ENCODE measurements at regions of chr1 and their contacts with region 1.

Region 1: DNA sequence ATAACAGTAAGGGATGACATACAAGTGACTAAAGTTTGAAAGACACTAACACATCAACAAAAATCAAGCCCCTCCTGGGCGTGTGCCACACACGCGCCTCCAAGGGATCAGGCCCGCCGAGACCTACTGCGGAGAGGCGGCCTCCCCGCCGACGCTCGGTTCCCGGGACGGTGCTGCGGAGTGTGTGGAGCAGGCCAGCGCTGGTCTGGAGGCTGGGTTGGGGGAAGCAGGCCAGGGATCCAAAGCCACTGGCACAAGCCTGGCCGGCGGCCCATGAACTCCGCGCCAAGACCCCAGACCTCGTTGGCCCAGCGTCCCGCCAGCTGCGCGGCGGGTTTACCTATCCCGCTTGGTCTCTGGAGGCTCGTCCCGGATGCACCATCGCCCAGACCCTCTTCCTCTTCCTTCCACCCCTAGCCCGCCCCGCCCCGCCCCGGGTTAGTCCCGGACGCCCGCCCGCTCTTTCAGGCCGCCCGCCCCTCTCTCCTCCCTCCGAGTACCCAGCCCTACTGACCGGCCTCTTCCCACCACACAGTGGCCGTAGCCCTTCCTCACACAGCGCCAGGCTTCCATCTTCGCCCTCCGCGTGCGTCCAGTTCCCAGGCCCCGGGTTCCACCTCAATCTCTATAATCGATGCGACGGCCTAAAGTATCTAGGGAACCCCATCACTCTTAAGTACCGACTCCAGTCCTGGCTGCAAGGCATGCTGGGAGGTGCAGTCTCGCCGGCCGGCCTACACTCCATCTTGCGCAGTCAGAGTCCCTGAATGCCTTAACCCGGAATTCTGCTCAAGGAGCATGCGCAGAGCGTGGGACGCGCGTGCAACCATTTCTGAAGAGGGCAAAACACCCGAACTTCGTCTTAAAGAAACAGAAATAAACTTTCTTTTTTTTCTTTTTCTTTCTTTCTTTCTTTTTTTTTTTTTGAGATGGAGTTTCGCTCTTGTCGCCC is at the start of gene ANGEL2:
- DNase-seq: peak; percentile 95 to 98 (median 97)
- ATAC-seq: peak; percentile 98 to 99 (median 98)
- H3K4me3 ChIP-seq: peak within 1 kb of the TSS; percentile 67 to 97 (median 85)
- H3K27ac ChIP-seq: peak within 1 kb of the TSS; percentile 66 to 98 (median 94)
- H3K4me1 ChIP-seq: peaks cover 3 to 31% (median 11%) of the 10 kb centered on the region in 12 donors
- H3K27me3 ChIP-seq: no peaks in the 10 kb centered on the region
- CTCF ChIP-seq: no peak
- POLR2A ChIP-seq: peak in 1 of 2 donors; percentile 51
- total RNA-seq, gene ANGEL2: 10.8 to 26.6 (median 15.4) TPM

Region 2: GRCh38 chr1:212916481-212917133 is 98.8 kb before region 1 on chr1:
- intact Hi-C with region 1: no loop called
- DNase-seq: peak; percentile 37 to 72 (median 54)
- ATAC-seq: peak; percentile 47 to 85 (median 76)
- H3K4me3 ChIP-seq: peak overlapping the region in 8 of 12 donors; percentile 5 to 39 (median 33)
- H3K27ac ChIP-seq: no peak overlapping the region
- H3K4me1 ChIP-seq: peaks cover 0 to 14% (median 0%) of the 10 kb centered on the region in 12 donors
- H3K27me3 ChIP-seq: peaks cover 0 to 9% (median 0%) of the 10 kb centered on the region in 9 donors
- CTCF ChIP-seq: no peak
- POLR2A ChIP-seq: no peak

Region 3: DNA sequence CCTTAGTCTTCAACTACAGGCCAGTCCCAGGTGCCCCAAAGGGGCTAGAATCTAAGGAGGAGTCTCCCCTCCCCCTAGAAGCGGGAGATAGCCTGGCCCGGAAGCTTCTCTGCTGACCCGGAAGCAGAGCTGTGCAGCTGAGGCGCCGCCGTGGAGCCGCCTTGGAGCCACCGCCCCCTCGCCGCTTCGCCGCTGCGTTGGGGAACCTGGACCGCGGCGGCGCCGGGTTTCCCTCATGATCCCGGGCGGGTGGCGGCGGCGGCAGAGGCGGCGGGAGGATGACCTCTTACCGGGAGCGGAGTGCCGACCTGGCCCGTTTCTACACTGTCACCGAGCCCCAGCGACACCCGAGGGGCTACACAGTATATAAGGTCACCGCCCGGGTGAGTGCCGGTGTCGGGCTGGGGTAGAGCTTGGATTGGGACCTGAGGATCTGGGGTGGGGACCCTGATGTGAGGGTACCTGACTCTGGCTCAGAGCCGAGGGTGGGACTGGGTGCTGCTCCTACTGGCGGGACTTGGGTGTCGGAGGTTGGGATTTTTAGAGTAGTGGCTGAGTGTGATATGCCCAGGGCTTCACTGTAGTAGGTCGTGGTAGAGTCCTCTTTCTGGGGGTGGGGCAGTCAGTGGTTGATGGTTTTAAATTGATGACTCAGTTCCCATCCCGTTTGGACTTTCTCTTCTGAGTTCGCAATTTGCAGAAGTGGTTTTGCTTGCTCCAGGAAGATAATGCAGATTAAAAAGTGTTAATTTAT is 35.9 kb after region 1 on chr1 and contains the start of gene RPS6KC1:
- intact Hi-C with region 1: loop called in 2 of 10 experiments (anchors 2 to 5 kb)
- DNase-seq: peak; percentile 85 to 93 (median 89)
- ATAC-seq: peak; percentile 95 to 100 (median 99)
- H3K4me3 ChIP-seq: peak within 1 kb of the TSS; percentile 74 to 98 (median 90)
- H3K27ac ChIP-seq: peak within 1 kb of the TSS in 11 of 12 donors; percentile 59 to 91 (median 78)
- H3K4me1 ChIP-seq: peaks cover 0 to 23% (median 12%) of the 10 kb centered on the region in 12 donors
- H3K27me3 ChIP-seq: peaks cover 0 to 28% (median 3%) of the 10 kb centered on the region in 9 donors
- CTCF ChIP-seq: peak in 2 of 12 donors; percentile 7 to 9
- POLR2A ChIP-seq: no peak
- total RNA-seq, gene RPS6KC1: 8.3 to 15.6 (median 10.9) TPM